Activated CD4-positive, alpha-beta memory T cell treated with anti-CD3 and anti-CD28 coated beads for 36 hours (primary cell): ENCODE measurements at regions of chr7 and their contacts with region 1.

Region 1: DNA sequence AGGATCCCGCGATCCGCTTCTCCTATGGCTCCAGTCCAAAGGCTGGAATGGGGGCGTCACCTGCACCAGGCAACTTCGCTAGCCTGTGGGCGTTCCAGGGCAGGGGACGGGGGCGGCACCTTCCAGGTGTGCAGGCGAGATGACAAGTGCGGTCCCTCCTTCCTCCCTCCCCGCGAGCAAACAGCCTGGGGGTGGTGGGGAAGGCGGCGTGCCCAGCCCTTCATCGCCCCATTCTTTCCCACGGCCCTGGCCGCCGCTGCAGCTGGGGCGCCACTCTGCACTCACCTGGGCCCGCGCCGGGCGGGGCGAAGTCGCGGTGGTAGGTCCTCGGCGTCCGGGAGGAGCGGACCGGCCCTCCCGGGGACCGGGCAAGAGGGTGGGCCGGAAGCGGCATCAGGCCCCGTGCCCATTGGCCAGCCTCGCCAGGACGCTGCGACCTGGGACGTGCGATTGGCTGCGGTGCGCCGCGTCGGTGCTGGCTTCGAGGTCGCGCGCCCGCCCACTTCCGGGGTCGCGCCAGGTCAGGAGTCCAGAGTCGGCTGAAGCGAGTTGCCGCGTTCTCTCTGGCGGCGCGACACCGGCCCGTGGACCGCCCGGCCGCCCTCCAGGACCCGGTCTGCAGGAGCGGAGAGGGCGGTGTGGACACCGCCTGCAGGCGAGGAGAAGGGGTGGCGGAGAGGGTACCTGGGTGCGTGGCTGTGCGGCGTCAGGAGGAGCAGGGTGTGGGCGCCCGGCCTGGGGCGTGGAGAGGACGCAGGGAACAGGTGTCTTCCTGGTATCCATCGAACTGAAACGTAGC is at the start of gene TECPR1:
- DNase-seq: peak; percentile 94
- H3K4me3 Mint-ChIP-seq: peak within 1 kb of the TSS; percentile 95
- H3K27ac Mint-ChIP-seq: peak within 1 kb of the TSS; percentile 94
- H3K4me1 Mint-ChIP-seq: peaks cover 52% of the 10 kb centered on the region
- H3K27me3 Mint-ChIP-seq: no peaks in the 10 kb centered on the region
- total RNA-seq, gene TECPR1: 34.5 to 35.3 TPM

Region 2: GRCh38 chr7:97872025-97872669 is 379.9 kb before region 1 on chr7 and contains the start of gene ASNS:
- CTCF ChIA-PET with region 1: no interaction called
- POLR2A ChIA-PET with region 1: no interaction called
- intact Hi-C with region 1: loop called (anchors 2 kb)
- DNase-seq: peak; percentile 96
- H3K4me3 Mint-ChIP-seq: peak within 1 kb of the TSS; percentile 86
- H3K27ac Mint-ChIP-seq: peak within 1 kb of the TSS; percentile 91
- H3K4me1 Mint-ChIP-seq: peaks cover 19% of the 10 kb centered on the region
- H3K27me3 Mint-ChIP-seq: no peaks in the 10 kb centered on the region
- total RNA-seq, gene ASNS: 200 to 214 TPM

Region 3: DNA sequence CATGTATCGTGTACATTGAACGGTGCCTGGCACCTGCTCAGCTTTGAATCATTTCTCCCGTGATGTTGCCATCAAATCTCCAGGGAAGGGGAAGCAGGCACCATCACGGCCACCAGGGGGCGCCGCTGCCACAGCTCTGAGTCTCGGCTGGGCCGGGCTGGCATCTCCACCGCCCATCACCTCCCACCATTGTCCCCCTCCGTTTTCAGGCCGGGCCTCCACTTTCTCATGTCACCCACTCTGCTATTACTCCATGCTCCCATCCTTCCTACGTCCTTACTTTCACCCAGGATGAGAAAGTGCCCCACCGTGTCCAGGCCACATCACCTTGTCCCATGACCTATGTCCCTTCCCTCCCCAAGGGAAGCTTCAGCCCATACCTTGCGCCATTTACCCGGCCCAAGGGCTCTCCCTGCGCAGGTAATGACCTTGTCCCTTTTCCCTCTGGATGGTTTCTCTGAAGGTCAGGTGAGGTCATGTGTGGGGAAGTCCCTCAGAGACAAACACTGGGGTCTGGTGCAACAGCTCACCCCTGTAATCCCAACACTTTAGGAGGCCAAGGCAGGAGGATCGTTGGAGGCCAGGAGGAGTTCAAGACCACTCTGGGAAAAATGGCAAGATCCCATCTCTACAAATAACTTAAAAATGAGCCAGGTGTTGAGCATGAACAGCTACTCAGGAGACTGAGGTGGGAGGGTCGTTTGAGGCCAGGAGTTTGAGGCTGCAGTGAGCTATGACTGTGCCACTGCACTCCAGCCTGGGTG is 230.3 kb before region 1 on chr7:
- CTCF ChIA-PET with region 1: interaction called, 12 read pairs
- POLR2A ChIA-PET with region 1: no interaction called
- intact Hi-C with region 1: no loop called
- DNase-seq: peak; percentile 88
- H3K4me3 Mint-ChIP-seq: no peak overlapping the region
- H3K27ac Mint-ChIP-seq: no peak overlapping the region
- H3K4me1 Mint-ChIP-seq: peaks cover 2% of the 10 kb centered on the region
- H3K27me3 Mint-ChIP-seq: peaks cover 2% of the 10 kb centered on the region

Region 4: DNA sequence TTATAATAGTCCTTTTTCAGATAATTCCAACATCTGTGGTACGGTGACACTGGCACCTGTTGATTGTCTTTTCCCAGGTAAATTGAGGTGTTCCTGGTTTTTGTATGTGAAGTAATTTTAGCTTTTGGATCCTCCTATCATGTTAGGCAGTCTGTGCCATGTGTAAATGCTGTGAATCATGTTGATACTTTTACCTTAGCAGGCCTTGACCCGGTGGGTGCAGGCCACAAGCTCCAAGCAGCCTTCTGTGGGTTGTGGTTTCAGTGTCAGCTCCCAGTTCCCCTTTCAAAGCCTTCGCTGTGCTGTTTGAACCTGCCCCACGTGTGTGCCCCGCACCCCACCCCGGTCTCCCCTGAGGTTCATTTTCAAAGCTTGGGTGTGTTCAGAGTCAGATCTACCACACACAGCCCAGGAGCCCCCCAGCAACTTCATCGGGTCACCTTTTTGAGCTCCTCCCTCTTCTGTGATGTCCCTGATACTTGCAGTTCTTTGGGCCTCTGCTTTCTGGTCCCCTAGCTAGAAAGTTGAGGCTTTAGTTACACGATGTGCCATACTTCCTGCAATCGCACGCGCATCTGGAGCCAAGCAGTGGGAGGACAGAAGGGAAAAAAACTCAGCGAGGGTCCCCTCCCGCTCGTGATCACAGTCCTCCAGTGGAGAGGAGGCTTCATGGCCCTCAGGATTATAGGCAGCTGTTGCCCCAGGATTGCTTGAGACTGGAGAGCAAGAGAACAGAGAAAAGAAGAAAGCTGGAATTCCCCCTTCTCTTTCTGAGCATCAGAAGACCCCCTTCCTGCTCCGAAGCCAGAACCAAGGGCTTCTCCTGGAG is 49.5 kb before region 1 on chr7:
- CTCF ChIA-PET with region 1: no interaction called
- POLR2A ChIA-PET with region 1: no interaction called
- intact Hi-C with region 1: loop called (anchors 2 kb)
- DNase-seq: peak; percentile 84
- H3K4me3 Mint-ChIP-seq: peak overlapping the region; percentile 29
- H3K27ac Mint-ChIP-seq: peak overlapping the region; percentile 44
- H3K4me1 Mint-ChIP-seq: peaks cover 48% of the 10 kb centered on the region
- H3K27me3 Mint-ChIP-seq: no peaks in the 10 kb centered on the region

Region 5: GRCh38 chr7:98280791-98281756 is 29.0 kb after region 1 on chr7 and contains the start of gene BRI3:
- CTCF ChIA-PET with region 1: no interaction called
- POLR2A ChIA-PET with region 1: no interaction called
- intact Hi-C with region 1: loop called (anchors 1 kb)
- DNase-seq: peak; percentile 95
- H3K4me3 Mint-ChIP-seq: peak within 1 kb of the TSS; percentile 79
- H3K27ac Mint-ChIP-seq: peak within 1 kb of the TSS; percentile 66
- H3K4me1 Mint-ChIP-seq: peaks cover 30% of the 10 kb centered on the region
- H3K27me3 Mint-ChIP-seq: no peaks in the 10 kb centered on the region
- total RNA-seq, gene BRI3: 52.0 to 52.9 TPM

Region 6: DNA sequence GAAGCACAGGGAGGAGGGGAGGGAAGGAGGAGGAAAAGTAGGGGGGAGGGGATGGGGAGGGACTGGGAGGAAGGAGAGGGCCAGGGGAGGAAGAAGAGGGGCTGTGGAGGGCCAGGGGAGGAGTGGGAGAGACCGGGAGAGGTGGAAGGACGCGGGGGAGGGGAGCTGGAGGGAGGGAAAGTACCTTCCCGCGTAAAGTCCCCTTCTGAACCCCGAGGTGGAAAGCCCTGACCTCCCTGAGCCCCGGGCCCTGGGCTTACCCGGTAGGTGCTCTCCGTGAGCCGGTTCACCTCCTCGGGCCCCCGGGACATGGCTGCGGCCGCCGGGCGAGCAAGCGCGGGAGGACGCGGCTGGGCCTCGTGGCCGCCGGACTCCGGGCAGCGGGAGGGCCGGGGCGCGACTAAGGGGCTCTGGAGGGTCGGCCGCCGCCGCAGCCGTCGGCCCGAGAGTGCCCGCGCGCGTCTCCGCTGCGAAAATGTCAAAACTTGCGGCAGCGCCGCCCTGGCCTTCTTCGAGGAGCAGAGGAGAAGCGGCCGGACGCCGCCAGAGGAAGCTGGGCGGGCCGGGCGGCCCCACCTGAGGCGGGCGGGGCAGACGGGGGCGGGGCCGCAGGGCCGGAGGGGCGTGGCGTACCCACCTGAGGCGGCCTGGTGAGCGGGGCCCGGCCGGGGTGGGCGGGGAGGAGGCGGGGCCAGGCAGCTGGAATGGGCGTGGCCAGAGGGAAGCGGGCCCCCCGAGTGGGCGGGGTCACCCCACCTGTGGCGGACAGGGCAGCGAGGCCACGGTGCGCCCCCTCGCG is 148.7 kb after region 1 on chr7 and contains the start of gene BAIAP2L1:
- CTCF ChIA-PET with region 1: interaction called, 6 read pairs
- POLR2A ChIA-PET with region 1: no interaction called
- intact Hi-C with region 1: loop called (anchors 1 kb)
- DNase-seq: peak; percentile 92
- H3K4me3 Mint-ChIP-seq: peak within 1 kb of the TSS; percentile 50
- H3K27ac Mint-ChIP-seq: no peak within 1 kb of the TSS
- H3K4me1 Mint-ChIP-seq: peaks cover 3% of the 10 kb centered on the region
- H3K27me3 Mint-ChIP-seq: peaks cover 13% of the 10 kb centered on the region
- total RNA-seq, gene BAIAP2L1: 3.2 to 4.5 TPM